ENCODE measurements at regions of chr6 and their contacts with region 1.

Region 1: GRCh38 chr6:154675602-154676088 is 57.6 kb upstream of the SCAF8 start:
- DNase-seq: peak; percentile 97
- ATAC-seq: peak; percentile 100
- H3K4me3 ChIP-seq: no peak overlapping the region
- H3K27ac ChIP-seq: no peak overlapping the region
- H3K4me1 ChIP-seq: no peaks in the 10 kb centered on the region
- H3K27me3 ChIP-seq: no peaks in the 10 kb centered on the region
- CTCF ChIP-seq: peak; percentile 98 to 100 (median 100); a peak in 5 of 6 replicates
- EP300 ChIP-seq: no peak
- POLR2A ChIP-seq: no peak
- RAD21 ChIP-seq: peak; percentile 97

Region 2: DNA sequence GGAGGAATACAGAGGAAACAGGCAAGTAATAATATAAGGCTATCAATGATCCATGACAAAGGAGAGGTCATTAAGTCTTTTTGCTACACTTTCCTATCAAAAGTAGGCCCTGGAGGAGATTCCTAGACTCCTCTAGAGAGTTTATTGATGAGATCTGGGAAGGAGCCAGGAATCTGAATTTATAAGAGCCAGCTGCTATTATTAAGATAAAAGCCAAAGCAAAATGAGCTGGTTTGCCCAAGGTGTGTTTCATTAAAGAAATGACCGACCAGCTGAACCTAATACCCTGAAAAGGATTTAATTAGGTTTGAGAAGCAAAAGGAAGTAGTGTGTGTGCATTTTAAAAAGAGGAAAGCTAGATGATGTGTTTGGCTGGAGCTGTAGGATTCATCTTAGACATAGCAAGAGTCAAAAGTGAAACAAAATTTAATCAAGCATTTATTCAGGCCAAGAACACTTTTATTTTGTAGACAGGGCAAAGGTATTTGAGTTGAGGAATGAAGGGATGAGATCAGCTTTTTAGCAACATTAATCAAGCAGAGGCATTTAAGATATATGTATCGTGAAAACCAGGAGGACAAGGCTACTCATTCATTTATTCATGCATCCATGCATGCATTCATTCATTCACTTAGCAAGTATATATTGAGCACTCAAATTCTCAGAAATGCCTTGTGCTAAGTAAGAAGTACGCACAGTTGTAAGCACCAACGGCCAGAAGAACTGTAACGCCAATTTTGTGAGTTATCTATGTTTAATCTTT is 14.0 kb after region 1 on chr6:
- CTCF ChIA-PET with region 1: interaction called, 25 read pairs
- POLR2A ChIA-PET with region 1: no interaction called
- RAD21 ChIA-PET with region 1: interaction called, 3 read pairs
- SMC1A ChIA-PET with region 1: interaction called, 15 read pairs
- in situ Hi-C with region 1: no loop called
- intact Hi-C with region 1: no loop called
- DNase-seq: no peak
- ATAC-seq: no peak
- H3K4me3 ChIP-seq: no peak overlapping the region
- H3K27ac ChIP-seq: no peak overlapping the region
- H3K4me1 ChIP-seq: no peaks in the 10 kb centered on the region; the same call in 1 of the 2 replicates
- H3K27me3 ChIP-seq: no peaks in the 10 kb centered on the region
- CTCF ChIP-seq: no peak
- EP300 ChIP-seq: no peak
- POLR2A ChIP-seq: no peak
- RAD21 ChIP-seq: no peak

Region 3: DNA sequence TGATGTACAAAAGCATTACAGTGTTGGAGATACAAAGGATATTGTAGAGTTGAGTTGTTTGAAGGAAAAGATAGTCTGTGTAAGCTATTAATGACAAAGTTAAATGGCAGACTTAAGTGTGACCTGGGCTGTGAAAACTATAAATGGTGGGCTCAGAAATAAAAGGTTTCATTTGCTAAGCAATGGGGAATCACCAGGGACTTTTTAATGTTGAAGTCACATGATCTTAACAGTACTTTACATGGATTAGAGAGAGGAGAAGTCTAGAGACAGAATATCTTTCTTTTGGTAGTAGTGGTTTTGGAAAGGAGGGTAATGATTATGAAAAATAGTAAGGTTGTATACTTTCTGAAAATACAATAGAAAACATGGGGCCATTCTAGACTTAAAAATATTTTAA is 124.7 kb after region 1 on chr6:
- CTCF ChIA-PET with region 1: interaction called, 155 read pairs
- POLR2A ChIA-PET with region 1: interaction called, 4 read pairs
- RAD21 ChIA-PET with region 1: interaction called, 60 read pairs
- SMC1A ChIA-PET with region 1: interaction called, 73 read pairs
- in situ Hi-C with region 1: loop called (anchors 5 kb)
- intact Hi-C with region 1: loop called (anchors 1 kb)
- DNase-seq: no peak
- ATAC-seq: peak; percentile 89
- H3K4me3 ChIP-seq: no peak overlapping the region
- H3K27ac ChIP-seq: peak overlapping the region; percentile 39
- H3K4me1 ChIP-seq: peaks cover 5% of the 10 kb centered on the region
- H3K27me3 ChIP-seq: no peaks in the 10 kb centered on the region
- CTCF ChIP-seq: no peak
- EP300 ChIP-seq: no peak
- POLR2A ChIP-seq: no peak
- RAD21 ChIP-seq: no peak

Region 4: DNA sequence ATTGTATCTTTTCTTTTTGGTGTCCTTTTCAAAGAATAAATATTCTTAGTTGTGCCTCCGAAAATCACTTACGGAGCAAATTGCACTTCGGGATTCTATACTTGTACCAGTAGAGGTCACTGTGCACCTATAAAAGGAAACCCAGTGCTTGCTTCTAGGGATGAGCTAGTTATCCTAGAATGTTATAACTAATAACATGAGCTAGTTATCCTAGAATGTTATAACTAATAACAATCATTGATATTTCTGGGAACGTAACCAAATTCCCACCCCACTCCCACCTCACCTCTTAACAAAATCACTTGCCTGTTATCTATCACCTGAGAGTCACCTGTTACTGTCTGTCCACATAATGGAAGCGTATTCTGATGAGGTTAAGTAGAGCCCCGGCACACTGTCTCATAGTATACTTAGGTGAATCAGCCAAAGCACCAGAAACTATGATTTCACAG is 192.5 kb after region 1 on chr6:
- CTCF ChIA-PET with region 1: interaction called, 9 read pairs
- POLR2A ChIA-PET with region 1: no interaction called
- RAD21 ChIA-PET with region 1: interaction called, 3 read pairs
- SMC1A ChIA-PET with region 1: interaction called, 3 read pairs
- in situ Hi-C with region 1: no loop called
- intact Hi-C with region 1: loop called (anchors 5 kb)
- DNase-seq: no peak
- ATAC-seq: no peak
- H3K4me3 ChIP-seq: no peak overlapping the region
- H3K27ac ChIP-seq: no peak overlapping the region
- H3K4me1 ChIP-seq: no peaks in the 10 kb centered on the region
- H3K27me3 ChIP-seq: no peaks in the 10 kb centered on the region
- CTCF ChIP-seq: peak; percentile 32 to 47 (median 45); a peak in 5 of 6 replicates
- EP300 ChIP-seq: no peak
- POLR2A ChIP-seq: no peak
- RAD21 ChIP-seq: peak; percentile 62

Region 5: DNA sequence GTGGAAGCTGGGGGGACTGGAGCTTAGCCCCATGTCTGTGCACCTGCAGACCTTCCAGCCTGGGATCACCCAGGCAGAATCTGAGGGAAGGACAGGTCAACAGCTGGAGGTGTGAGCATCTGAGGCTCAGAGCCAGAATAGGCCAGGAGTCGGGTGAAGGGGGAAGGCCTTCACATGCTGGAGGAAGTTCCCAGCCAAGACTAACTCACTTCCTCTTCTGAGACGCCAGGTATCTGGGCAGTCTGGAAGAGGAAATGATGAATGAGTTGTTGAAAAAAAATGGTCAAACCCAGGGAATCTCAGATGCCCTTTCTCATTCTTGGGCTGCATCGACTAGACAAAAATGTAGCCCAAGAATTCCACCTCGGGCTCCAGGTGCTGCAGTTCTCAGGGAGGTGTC is 245.8 kb after region 1 on chr6:
- CTCF ChIA-PET with region 1: interaction called, 66 read pairs
- POLR2A ChIA-PET with region 1: no interaction called
- RAD21 ChIA-PET with region 1: interaction called, 45 read pairs
- SMC1A ChIA-PET with region 1: interaction called, 8 read pairs
- in situ Hi-C with region 1: loop called (anchors 5 kb)
- intact Hi-C with region 1: no loop called
- DNase-seq: no peak
- ATAC-seq: peak; percentile 73
- H3K4me3 ChIP-seq: no peak overlapping the region
- H3K27ac ChIP-seq: no peak overlapping the region
- H3K4me1 ChIP-seq: no peaks in the 10 kb centered on the region
- H3K27me3 ChIP-seq: no peaks in the 10 kb centered on the region
- CTCF ChIP-seq: no peak
- EP300 ChIP-seq: no peak
- POLR2A ChIP-seq: no peak
- RAD21 ChIP-seq: no peak

Region 6: DNA sequence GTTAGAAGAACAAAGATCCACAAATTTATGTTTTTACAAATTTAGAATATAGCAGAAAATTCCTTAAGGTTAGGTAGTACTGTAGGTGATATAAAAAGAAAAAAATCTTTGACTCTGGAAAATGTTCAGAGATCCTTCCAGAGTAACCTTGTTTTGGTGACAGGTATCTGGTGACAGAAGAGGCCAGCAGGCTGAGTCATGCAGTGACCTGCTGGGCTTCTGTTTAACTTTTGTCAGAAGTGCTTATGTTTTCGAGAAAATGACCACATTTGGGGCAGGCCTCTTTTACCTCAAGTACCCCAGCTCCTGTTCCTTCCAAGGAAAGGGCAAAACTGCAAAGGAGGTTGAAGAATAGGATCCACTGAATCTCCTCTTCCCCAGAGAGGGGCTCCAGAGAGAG is 577.7 kb after region 1 on chr6:
- CTCF ChIA-PET with region 1: interaction called, 7 read pairs
- POLR2A ChIA-PET with region 1: no interaction called
- RAD21 ChIA-PET with region 1: interaction called, 6 read pairs
- SMC1A ChIA-PET with region 1: interaction called, 4 read pairs
- in situ Hi-C with region 1: loop called (anchors 5 kb)
- intact Hi-C with region 1: loop called (anchors 5 kb)
- DNase-seq: no peak
- ATAC-seq: no peak
- H3K4me3 ChIP-seq: no peak overlapping the region
- H3K27ac ChIP-seq: no peak overlapping the region
- H3K4me1 ChIP-seq: no peaks in the 10 kb centered on the region
- H3K27me3 ChIP-seq: no peaks in the 10 kb centered on the region
- CTCF ChIP-seq: no peak
- EP300 ChIP-seq: no peak
- POLR2A ChIP-seq: no peak
- RAD21 ChIP-seq: no peak